Astrocyte of the cerebellum (primary cell): ENCODE measurements at regions of chr2 and their contacts with region 1.

Region 1: GRCh38 chr2:104704496-104705245 is 149.2 kb upstream of the POU3F3 start:
- DNase-seq: no peak
- H3K4me3 ChIP-seq: no peak overlapping the region
- CTCF ChIP-seq: no peak

Region 2: DNA sequence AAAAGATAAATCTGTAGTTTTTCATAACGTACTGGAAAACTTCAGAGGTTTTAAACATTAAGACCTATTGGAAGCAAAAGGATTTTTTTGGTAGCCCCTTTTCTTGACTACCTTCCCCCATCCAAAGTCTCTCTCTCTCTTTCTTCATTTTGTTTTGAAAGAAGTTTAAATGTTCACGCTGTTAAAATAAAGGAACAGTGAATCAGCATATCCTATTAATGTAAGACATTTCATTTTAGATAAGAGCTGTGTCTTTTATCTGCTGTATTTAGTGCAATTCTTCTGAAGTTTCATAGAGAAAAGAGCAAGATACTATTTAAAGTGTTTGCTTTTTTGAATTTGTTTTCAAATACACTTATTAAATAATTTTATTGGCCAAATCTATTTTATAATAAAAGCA is 56.3 kb before region 1 on chr2:
- in situ Hi-C with region 1: loop called (anchors 5 kb)
- DNase-seq: no peak
- H3K4me3 ChIP-seq: no peak overlapping the region
- CTCF ChIP-seq: no peak